H1 (cell line): ENCODE measurements at regions of chr15 and their contacts with region 1.

Region 1: GRCh38 chr15:85318048-85318731 is 62.2 kb upstream of the AKAP13 start:
- DNase-seq: peak in 1 of 2 experiments; percentile 13
- H3K4me3 ChIP-seq: no peak overlapping the region
- H3K27ac ChIP-seq: no peak overlapping the region
- H3K4me1 ChIP-seq: no peaks in the 10 kb centered on the region
- H3K27me3 ChIP-seq: no peaks in the 10 kb centered on the region
- CTCF ChIP-seq: peak in 1 of 3 experiments; percentile 12; a peak in 1 of 4 replicates
- EP300 ChIP-seq: no peak
- POLR2A ChIP-seq: no peak
- RAD21 ChIP-seq: no peak; a peak in 1 of 4 replicates

Region 2: GRCh38 chr15:85059734-85060133 is 258.5 kb before region 1 on chr15:
- CTCF ChIA-PET with region 1: no interaction called
- POLR2A ChIA-PET with region 1: no interaction called
- DNase-seq: no peak
- H3K4me3 ChIP-seq: no peak overlapping the region
- H3K27ac ChIP-seq: no peak overlapping the region
- H3K4me1 ChIP-seq: no peaks in the 10 kb centered on the region
- H3K27me3 ChIP-seq: no peaks in the 10 kb centered on the region
- CTCF ChIP-seq: no peak
- EP300 ChIP-seq: no peak
- POLR2A ChIP-seq: no peak
- RAD21 ChIP-seq: no peak

Region 3: DNA sequence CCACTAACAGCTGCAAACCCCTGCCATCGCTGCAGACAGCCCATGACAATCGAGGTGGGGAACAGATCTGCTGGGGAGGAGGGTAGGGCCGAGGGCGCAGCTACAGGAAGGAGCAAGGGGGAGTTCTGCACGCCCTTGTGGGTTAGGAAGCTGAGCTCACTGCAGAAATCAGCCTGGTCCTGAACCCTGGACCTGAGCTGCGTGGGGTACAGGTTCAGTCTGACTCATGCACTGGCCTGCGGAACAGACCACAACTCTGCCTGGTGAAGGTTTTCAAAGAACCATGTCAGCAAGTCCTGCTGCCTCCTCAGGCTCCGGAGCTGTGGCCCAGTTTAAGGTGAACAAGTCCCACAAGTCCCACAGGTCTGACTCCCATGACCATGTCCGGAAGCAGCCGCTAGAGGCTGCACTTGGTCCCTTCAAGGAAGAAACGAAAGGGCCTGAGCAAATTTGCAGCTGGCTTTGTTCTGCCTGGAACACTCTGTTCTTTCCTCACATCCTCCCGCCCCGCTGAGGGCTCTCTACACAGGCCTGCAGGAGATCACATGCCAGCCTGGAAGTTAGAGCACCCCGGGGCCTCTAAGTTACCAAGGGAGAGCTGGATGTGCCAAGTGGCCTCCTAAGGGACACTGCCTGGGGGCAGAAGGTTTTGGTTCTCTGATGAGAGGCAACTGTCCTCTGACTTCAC is 12.9 kb after region 1 on chr15:
- CTCF ChIA-PET with region 1: interaction called, 34 read pairs
- POLR2A ChIA-PET with region 1: no interaction called
- DNase-seq: peak; percentile 77 to 85
- H3K4me3 ChIP-seq: no peak overlapping the region
- H3K27ac ChIP-seq: no peak overlapping the region
- H3K4me1 ChIP-seq: peaks cover 0 to 4% (median 2%) of the 10 kb centered on the region in 4 experiments; a peak in 4 of 7 replicates
- H3K27me3 ChIP-seq: no peaks in the 10 kb centered on the region
- CTCF ChIP-seq: peak; percentile 86 to 98 (median 91)
- EP300 ChIP-seq: no peak
- POLR2A ChIP-seq: no peak
- RAD21 ChIP-seq: peak; percentile 95 to 97

Region 4: GRCh38 chr15:85337425-85338074 is 19.4 kb after region 1 on chr15:
- CTCF ChIA-PET with region 1: interaction called, 11 read pairs
- POLR2A ChIA-PET with region 1: no interaction called
- DNase-seq: no peak
- H3K4me3 ChIP-seq: no peak overlapping the region
- H3K27ac ChIP-seq: no peak overlapping the region
- H3K4me1 ChIP-seq: peaks cover 3 to 4% (median 4%) of the 10 kb centered on the region in 4 experiments; a peak in 6 of 7 replicates
- H3K27me3 ChIP-seq: no peaks in the 10 kb centered on the region
- CTCF ChIP-seq: no peak
- EP300 ChIP-seq: no peak
- POLR2A ChIP-seq: no peak
- RAD21 ChIP-seq: no peak